ENCODE measurements at regions of chr15 and their contacts with region 1.

Region 1: DNA sequence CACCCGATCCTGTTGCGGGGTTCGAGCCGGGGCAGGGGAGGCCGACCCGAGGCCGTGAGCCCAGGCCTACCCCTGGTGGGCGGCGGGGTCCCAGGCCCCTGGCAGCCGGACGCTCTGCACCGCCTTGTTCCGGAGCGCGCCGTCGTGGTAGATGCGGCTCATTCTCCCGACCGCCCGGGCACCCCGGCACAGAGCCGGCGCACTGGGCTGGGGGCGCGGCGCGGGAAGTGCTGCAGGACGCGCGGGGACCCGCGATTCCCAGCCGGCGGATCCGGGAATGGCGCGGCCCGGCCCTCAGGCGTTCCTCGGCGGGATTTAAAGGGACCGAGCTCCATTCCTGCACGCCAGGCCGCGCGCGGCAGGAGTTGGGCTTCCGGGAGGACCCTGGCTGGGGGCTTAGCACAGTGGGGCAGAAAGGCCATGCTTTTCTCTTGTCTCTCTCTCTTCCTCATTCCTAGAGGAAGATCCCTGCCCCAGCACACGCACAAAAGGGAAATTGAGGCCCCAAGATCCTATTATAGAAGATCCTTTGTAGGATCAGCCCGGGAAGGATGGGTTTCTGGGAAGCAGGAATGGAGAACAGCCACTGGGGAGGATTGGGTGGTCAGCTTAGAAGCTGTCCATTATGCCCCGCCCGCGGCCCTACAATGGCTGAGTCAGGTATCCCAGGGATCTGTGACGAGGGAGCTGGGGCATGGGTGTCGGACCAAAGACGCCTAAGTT is at the start of gene ARPIN:
- DNase-seq: peak; percentile 16
- ATAC-seq: peak; percentile 84
- H3K4me3 ChIP-seq: peak within 1 kb of the TSS; percentile 80 to 86 (median 84)
- H3K27ac ChIP-seq: peak within 1 kb of the TSS; percentile 58
- H3K4me1 ChIP-seq: peaks cover 24% of the 10 kb centered on the region
- H3K27me3 ChIP-seq: no peaks in the 10 kb centered on the region
- CTCF ChIP-seq: no peak
- EP300 ChIP-seq: no peak
- POLR2A ChIP-seq: peak in 1 of 2 experiments; percentile 46; a peak in 3 of 4 replicates
- RAD21 ChIP-seq: no peak
- total RNA-seq, gene ARPIN: 5.0 and 5.3 TPM in 2 replicates

Region 2: GRCh38 chr15:89971592-89971997 is 58.8 kb after region 1 on chr15:
- CTCF ChIA-PET with region 1: no interaction called
- POLR2A ChIA-PET with region 1: interaction called, 5 read pairs
- in situ Hi-C with region 1: loop called (anchors 5 kb)
- intact Hi-C with region 1: no loop called
- DNase-seq: peak; percentile 62
- ATAC-seq: peak; percentile 100
- H3K4me3 ChIP-seq: no peak overlapping the region
- H3K27ac ChIP-seq: no peak overlapping the region
- H3K4me1 ChIP-seq: no peaks in the 10 kb centered on the region; the same call in none of the 2 replicates
- H3K27me3 ChIP-seq: no peaks in the 10 kb centered on the region
- CTCF ChIP-seq: peak; percentile 75
- EP300 ChIP-seq: no peak
- POLR2A ChIP-seq: no peak
- RAD21 ChIP-seq: peak; percentile 75; the same call in 1 of the 2 replicates

Region 3: DNA sequence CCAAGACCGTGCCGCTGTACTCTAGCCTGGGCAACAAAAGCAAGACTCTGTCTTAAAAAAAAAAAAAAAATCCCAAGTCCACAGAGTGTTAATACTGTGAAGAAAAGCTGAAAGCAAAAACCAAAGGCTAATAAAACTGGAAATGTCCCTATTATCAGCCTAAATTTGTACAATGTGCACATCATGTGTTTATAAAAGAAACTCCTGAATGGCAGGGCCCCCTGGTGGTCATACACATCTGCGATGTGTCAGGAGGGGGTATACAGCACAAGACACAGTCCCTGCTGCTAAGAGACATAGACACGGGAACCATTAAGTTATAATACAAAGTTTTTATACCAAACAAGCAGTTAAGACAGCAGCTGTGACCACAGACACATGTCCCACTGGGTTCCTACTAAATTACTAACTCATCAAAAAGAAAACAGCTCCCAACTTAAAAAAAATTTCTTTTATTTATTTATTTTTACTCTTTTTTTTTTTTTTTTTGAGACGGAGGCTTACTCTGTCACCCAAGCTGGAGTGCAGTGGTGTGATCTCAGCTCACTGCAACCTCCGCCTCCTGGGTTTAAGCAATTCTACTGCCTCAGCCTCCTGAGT is 158.5 kb after region 1 on chr15:
- CTCF ChIA-PET with region 1: no interaction called
- POLR2A ChIA-PET with region 1: no interaction called
- in situ Hi-C with region 1: no loop called
- intact Hi-C with region 1: loop called (anchors 2 kb)
- DNase-seq: peak; percentile 71
- ATAC-seq: peak; percentile 67
- H3K4me3 ChIP-seq: no peak overlapping the region
- H3K27ac ChIP-seq: no peak overlapping the region
- H3K4me1 ChIP-seq: peaks cover 22% of the 10 kb centered on the region
- H3K27me3 ChIP-seq: no peaks in the 10 kb centered on the region
- CTCF ChIP-seq: peak; percentile 74
- EP300 ChIP-seq: no peak
- POLR2A ChIP-seq: no peak
- RAD21 ChIP-seq: peak; percentile 75